Mammary epithelial cell (primary cell): ENCODE measurements at regions of chr2 and their contacts with region 1.

Region 1: GRCh38 chr2:227766373-227766883 is 20.7 kb downstream of the SCYGR8 start:
- DNase-seq: peak; percentile 51
- H3K4me3 ChIP-seq: no peak overlapping the region
- H3K27ac ChIP-seq: no peak overlapping the region
- H3K4me1 ChIP-seq: no peaks in the 10 kb centered on the region
- H3K27me3 ChIP-seq: no peaks in the 10 kb centered on the region
- CTCF ChIP-seq: peak; percentile 81 to 85

Region 2: DNA sequence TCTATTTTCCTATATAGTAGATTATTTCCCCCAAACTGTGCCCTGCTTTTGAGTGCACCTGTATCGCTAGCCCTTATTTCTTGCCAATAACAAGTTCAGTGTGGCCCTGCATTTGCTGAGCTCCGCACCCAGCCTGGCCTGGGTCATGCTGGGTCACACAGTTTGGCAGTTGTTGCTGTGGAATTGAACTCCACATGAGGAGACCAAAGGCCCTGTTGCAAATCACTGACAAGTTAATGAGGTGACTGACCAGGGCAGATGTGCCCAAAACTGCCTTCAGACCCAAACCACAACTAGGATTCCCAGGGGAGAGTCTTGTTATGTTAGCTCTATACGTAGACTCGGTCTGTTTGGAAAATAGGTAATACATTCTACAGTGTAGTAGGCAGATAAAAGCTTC is 633.4 kb before region 1 on chr2:
- CTCF ChIA-PET with region 1: no interaction called
- dilution Hi-C with region 1: no loop called
- in situ Hi-C with region 1: loop called (anchors 25 kb)
- intact Hi-C with region 1: loop called (anchors 2 kb)
- DNase-seq: no peak
- H3K4me3 ChIP-seq: no peak overlapping the region
- H3K27ac ChIP-seq: no peak overlapping the region
- H3K4me1 ChIP-seq: no peaks in the 10 kb centered on the region
- H3K27me3 ChIP-seq: no peaks in the 10 kb centered on the region
- CTCF ChIP-seq: no peak

Region 3: GRCh38 chr2:227471924-227472264 is 294.5 kb before region 1 on chr2 and contains the start of gene AGFG1:
- CTCF ChIA-PET with region 1: no interaction called
- dilution Hi-C with region 1: no loop called
- in situ Hi-C with region 1: no loop called
- intact Hi-C with region 1: loop called (anchors 1 kb)
- DNase-seq: peak; percentile 75
- H3K4me3 ChIP-seq: peak within 1 kb of the TSS; percentile 97 to 98 (median 97)
- H3K27ac ChIP-seq: peak within 1 kb of the TSS; percentile 82
- H3K4me1 ChIP-seq: peaks cover 23% of the 10 kb centered on the region
- H3K27me3 ChIP-seq: no peaks in the 10 kb centered on the region
- CTCF ChIP-seq: peak; percentile 94 to 97
- total RNA-seq, gene AGFG1: 92.2 to 108 TPM

Region 4: GRCh38 chr2:227655454-227655853 is 111.0 kb before region 1 on chr2:
- CTCF ChIA-PET with region 1: interaction called, 14 read pairs
- dilution Hi-C with region 1: no loop called
- in situ Hi-C with region 1: loop called (anchors 10 kb)
- intact Hi-C with region 1: loop called (anchors 1 kb)
- DNase-seq: peak; percentile 82
- H3K4me3 ChIP-seq: no peak overlapping the region
- H3K27ac ChIP-seq: no peak overlapping the region
- H3K4me1 ChIP-seq: peaks cover 13% of the 10 kb centered on the region
- H3K27me3 ChIP-seq: no peaks in the 10 kb centered on the region
- CTCF ChIP-seq: no peak

Region 5: DNA sequence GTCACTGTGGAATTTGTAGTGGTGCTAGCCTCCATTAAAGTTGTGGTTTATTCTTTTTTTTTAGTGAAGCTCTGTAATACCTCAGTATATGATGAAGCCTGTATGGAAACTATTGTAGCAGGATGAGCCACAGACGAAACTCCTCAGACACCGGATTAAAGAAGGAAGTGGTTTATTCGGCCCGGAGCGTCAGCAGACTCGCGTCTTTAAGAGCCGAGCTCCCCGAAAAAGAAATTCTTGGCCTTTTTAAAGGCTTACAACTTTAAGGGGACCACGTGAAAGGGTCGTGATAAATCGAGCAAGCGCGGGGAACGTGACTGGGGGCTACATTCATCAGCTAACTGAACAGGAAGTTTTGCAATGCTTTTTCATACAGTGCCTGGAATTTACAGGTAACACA is 39.1 kb after region 1 on chr2:
- CTCF ChIA-PET with region 1: no interaction called
- dilution Hi-C with region 1: no loop called
- in situ Hi-C with region 1: no loop called
- intact Hi-C with region 1: no loop called
- DNase-seq: no peak
- H3K4me3 ChIP-seq: no peak overlapping the region
- H3K27ac ChIP-seq: no peak overlapping the region
- H3K4me1 ChIP-seq: no peaks in the 10 kb centered on the region
- H3K27me3 ChIP-seq: no peaks in the 10 kb centered on the region
- CTCF ChIP-seq: no peak

Region 6: DNA sequence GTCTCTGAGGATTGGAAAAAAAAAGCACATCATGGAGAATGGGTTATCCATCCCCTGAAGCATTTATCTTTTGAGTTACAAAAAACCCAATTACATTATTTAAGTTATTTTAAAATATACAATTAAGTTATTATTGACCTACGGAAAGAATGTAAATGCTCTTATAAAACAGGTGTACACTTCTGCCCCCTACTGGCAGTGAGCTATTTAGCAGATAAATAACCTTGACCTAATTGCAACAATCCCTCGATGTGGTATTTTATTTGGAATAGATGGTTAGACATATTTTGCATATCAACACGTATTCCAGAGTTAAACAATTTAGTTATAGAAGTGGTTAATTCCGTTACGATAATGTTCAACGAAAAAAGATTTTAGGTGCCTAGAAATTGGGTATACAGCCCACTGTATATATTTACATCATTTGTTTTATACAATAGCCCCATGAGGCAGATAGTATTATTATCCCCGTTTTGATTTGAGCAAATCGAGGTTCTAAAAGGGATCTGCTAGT is 95.9 kb after region 1 on chr2:
- CTCF ChIA-PET with region 1: no interaction called
- dilution Hi-C with region 1: no loop called
- in situ Hi-C with region 1: no loop called
- intact Hi-C with region 1: loop called (anchors 1 kb)
- DNase-seq: peak; percentile 36
- H3K4me3 ChIP-seq: no peak overlapping the region
- H3K27ac ChIP-seq: peak overlapping the region; percentile 69
- H3K4me1 ChIP-seq: peaks cover 33% of the 10 kb centered on the region
- H3K27me3 ChIP-seq: no peaks in the 10 kb centered on the region
- CTCF ChIP-seq: peak; percentile 68 to 71